Posterior cingulate gyrus (tissue), 11 donors: ENCODE measurements at regions of chr19 and their contacts with region 1.

Region 1: GRCh38 chr19:12669270-12670158 is 2.9 kb downstream of the WDR83 start:
- DNase-seq: peak; percentile 70 to 97 (median 82)

Region 2: DNA sequence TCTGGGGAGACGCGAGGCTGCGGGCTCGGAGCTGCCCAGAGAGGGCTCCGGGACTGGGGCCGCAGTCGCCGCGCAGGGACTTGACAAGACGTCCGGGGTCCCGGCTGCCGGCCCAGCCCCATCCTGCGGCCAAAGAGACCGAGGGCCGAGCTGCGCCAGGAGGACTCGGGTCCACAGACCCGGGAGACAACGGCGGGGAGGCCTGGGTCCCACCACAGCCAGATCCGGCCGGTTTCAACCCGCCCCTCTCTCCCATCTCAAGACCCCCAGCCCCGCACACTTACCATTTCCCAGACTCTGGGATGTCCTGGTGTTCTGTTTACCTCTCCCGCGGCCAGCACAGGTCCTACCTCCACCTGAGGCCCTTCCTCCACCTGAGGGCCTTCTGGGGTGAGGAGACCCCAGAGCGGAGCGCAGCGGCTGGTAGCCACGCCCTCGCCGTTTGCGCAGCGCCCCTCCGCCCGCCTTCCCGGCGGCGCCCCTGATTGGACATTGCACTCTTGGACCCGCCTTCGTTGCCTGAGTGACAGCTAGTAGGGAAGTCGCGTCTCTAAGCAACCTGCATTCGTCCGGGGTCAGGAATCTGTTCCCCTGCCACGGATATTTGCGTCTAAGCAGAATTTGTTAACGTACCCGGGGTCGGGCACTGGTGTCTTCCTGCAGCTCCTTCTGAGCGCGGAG is 185.0 kb before region 1 on chr19 and contains the start of gene ZNF709:
- intact Hi-C with region 1: no loop called
- DNase-seq: peak; percentile 84 to 99 (median 92)

Region 3: DNA sequence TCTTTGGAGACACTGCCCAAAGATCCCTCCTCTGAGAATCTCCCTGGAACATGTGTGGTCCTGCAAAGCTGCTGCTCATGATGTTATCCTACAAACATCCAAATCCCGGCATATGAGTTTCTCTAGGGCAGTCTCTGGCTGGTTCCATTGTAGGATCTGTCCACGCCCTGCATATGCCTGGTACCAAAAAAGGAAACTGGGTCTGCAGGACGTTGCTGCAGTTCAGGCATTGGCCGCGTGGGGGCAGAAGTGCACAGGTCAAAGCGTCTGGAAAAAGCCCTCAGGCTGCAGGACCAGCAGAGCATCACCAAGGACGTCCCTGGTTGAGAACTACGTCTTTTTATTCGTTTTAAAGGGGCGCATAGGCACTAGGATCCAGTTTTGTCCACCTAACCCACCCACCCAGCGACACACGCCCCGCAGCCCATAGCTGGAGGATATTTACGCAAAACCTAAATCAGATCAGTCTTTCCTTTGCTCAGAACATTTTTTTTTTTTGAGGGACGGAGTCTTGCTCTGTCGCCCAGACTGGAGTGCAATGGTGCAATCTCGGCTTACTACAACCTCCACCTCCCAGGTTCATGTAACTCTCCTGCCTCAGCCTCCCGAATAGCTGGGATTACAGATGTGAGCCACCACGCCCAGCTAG is 105.4 kb before region 1 on chr19:
- intact Hi-C with region 1: loop called (anchors 1 kb)
- DNase-seq: peak; percentile 77 to 99 (median 93)

Region 4: DNA sequence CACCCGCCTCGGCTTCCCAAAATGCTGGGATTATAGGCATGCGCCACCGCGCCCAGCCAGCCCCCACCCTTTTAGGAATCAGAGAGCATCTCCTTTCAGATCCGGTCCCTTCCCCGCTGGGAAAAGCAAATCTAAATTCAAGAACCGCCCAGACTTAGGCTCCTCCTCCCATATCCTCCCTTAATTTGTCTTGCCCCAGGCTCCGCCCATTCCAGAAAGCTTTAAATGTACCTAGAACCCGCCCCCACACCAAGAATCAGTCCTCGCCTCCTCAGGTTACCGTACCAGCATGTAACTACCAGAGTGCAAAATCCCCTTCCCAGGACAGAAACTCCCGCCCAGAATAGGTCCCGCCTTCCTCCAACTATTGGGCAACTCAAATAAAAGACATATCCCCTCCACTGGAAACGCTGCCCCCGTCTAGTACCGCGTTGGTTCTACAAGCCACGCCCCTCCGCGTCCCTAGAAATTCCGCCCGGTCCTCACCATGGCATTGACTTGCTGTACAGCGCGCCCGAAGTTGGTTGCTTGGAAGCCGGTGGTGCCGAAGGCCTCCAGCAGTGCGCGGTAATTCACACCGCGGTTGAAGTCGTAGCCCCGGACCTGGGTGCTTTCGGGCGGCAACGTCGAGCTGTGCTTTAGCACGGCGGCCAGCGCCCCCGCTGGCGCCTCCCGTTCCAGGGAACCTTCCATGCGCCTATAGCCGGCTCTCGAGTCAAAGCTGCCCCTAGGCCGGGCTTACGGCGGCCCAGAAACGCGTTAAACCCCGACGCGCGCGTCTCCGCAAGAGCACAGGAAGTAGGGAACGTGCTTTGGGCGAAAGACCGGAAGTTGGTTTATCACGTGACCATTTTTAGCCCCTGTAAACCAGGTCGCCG is 11.8 kb after region 1 on chr19 and contains the start of gene DHPS:
- intact Hi-C with region 1: loop called (anchors 1 kb)
- DNase-seq: peak; percentile 80 to 98 (median 88)

Region 5: DNA sequence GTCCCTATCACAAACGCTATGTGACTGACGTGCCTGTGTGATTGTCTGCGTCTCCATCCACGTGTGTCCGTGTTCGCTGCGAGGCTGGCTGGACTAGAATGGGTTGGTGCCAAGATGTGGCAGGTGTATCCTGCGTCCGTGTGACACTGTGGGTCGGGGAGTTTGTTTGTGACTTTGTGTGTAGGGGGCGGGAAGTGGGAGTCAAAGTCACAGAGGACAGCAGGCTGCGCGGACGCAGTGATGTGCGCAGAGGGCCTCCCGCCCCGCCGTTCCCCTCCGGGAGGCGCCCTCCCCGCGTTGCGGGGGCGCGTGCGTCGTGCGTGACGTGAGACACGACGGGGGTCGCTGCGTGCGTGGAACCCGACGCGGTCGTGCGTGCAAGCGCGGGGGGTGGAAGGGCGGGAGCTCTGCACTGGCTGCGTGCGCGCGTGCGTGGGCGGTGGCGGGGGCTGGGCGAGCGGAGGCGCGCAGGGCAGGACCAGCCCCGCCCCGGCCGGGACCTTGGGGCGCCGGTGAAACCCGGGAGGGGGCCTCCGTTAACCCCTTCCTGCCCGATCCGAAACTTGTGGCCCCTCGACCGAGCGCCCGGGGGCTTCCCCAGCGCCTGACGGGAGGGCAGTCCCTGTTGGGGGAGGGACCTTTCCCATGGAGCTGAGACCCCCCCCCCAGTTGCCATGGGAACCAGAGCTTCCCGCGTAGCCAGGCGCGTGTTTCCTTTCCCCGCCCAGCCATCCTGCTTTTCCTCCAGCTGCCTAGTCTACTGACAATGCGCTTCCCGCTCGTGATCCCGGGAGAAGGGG is 112.9 kb after region 1 on chr19:
- intact Hi-C with region 1: no loop called
- DNase-seq: peak; percentile 77 to 99 (median 92)